Activated CD4-positive, alpha-beta memory T cell treated with anti-CD3 and anti-CD28 coated beads for 36 hours (primary cell): ENCODE measurements at regions of chr1 and their contacts with region 1.

Region 1: DNA sequence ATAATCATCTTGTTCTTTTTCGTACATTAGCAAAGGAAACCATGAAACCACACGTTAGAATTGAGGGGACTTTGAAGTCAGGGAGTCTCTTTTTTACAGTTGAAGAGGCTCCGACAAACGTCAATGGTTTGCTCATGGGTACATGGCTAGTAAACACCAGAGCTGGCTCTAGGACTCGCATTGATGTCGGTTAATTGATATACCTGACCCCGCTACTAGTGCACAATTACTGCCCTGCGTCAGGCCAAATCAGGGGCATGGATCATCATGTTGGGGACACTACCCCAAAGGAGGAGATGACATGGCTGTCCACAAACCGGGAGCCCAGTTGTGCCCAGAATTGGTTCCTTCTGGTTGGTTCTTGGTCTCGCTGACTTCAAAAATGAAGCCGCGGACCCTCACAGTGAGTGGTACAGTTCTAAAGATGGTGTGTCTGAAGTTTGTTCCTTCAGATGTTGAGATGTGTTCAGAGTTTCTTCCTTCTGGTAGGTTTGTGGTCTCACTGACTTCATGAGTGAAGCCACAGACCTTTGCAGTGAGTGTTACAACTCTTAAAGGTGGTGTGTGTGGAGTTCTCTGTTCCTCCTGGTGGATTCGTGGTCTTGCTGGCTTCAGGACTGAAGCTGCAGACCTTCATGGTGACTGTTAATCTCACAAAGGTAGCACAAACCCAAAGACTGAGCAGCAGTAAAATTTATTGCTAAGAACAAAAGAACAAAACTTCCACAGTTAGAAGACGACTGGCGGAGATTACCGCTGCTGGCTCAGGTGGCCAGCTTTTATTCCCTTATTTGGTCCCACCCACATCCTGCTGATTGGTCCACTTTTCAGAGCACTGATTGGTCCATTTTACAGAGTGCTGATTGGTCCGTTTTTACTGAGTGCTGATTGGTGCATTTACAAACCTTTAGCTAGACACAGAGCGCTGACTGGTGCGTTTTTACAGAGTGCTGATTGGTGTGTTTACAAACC is 126.9 kb upstream of the ERRFI1 start:
- DNase-seq: peak; percentile 72
- H3K4me3 Mint-ChIP-seq: peak overlapping the region; percentile 69
- H3K27ac Mint-ChIP-seq: peak overlapping the region; percentile 94
- H3K4me1 Mint-ChIP-seq: peaks cover 42% of the 10 kb centered on the region
- H3K27me3 Mint-ChIP-seq: no peaks in the 10 kb centered on the region

Region 2: GRCh38 chr1:7922301-7922700 is 230.7 kb before region 1 on chr1:
- CTCF ChIA-PET with region 1: no interaction called
- POLR2A ChIA-PET with region 1: no interaction called
- intact Hi-C with region 1: no loop called
- DNase-seq: no peak
- H3K4me3 Mint-ChIP-seq: no peak overlapping the region
- H3K27ac Mint-ChIP-seq: no peak overlapping the region
- H3K4me1 Mint-ChIP-seq: peaks cover 20% of the 10 kb centered on the region
- H3K27me3 Mint-ChIP-seq: no peaks in the 10 kb centered on the region

Region 3: GRCh38 chr1:8182034-8182761 is 29.2 kb after region 1 on chr1:
- CTCF ChIA-PET with region 1: no interaction called
- POLR2A ChIA-PET with region 1: no interaction called
- intact Hi-C with region 1: loop called (anchors 1 kb)
- DNase-seq: peak; percentile 58
- H3K4me3 Mint-ChIP-seq: peak overlapping the region; percentile 24
- H3K27ac Mint-ChIP-seq: peak overlapping the region; percentile 69
- H3K4me1 Mint-ChIP-seq: peaks cover 22% of the 10 kb centered on the region
- H3K27me3 Mint-ChIP-seq: no peaks in the 10 kb centered on the region

Region 4: DNA sequence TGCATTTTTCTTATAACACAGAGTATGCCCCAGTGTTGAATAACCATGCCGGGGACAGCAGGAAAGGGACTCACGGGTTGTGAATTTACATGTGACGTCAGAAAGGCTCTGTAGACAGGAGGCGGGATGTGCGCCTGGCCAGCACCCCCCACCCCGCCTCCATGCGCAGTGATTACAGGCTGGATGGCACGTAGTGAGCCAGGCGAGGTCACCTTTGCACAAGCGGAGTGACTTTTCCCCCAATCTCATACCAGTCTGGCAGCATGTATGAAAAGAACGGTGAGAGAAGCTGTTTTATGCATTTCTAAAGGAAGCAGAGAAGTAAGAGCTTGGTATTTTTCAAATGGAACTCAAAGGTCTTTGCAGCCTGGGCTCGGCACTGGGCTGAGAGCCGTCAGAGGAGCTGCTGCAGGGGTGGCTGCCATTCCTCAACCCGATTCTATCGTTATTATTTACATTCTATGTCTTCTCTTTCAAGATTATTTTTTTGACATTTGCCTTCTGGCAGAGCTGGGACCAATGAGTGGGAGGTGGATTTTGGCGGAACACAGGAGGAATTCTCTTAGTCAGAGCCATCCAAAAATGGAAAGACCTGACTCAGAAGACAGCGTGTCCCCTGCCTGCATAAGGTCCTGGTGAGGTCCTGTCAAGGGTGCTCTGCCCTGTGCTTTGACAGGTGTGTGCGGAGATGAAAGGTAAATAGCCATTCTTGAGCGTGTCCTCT is 49.3 kb after region 1 on chr1:
- CTCF ChIA-PET with region 1: no interaction called
- POLR2A ChIA-PET with region 1: no interaction called
- intact Hi-C with region 1: no loop called
- DNase-seq: no peak
- H3K4me3 Mint-ChIP-seq: no peak overlapping the region
- H3K27ac Mint-ChIP-seq: no peak overlapping the region
- H3K4me1 Mint-ChIP-seq: peaks cover 7% of the 10 kb centered on the region
- H3K27me3 Mint-ChIP-seq: no peaks in the 10 kb centered on the region